Activated naive CD4-positive, alpha-beta T cell treated with anti-CD3 and anti-CD28 coated beads for 36 hours (primary cell): ENCODE measurements at regions of chr10 and their contacts with region 1.

Region 1: DNA sequence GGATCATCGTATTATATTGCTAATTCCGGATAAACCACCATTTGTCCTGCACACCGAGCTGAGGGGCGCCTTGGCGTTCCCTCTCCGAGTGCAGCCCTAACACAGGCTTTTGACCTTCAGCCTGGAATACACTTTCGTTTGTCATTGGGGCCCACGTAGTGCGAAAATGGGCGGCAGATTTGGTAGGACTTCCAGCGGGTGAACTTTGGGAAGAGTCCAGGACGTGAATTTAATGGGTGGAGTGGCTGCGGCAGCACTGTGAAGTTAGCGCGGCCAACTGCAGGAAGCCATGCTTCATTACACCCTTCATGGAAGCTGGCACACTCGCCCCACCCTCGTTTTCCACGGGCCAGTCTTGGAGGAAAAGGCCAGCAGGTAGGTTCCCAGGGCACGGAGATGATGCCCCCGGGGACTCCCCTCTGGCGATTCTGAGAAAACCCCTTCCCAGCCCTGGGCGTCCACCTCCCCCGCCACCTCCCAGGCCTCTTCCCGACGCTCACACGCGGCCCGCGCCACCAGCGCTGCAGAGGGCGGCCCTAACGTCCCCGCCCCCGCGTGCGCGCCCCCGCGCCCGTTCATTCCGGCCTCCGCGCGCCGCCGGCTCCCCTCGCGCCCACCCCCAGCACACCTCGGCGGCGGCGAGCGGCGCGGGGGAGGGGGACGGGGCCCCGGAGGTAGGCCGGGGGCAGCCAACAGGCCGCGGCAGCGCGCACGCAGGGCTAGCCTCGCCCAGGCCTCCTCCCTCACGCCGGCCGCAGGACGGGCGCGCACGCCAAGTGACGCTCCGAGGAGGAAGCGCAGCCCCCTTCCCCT is at the start of gene MLLT10:
- DNase-seq: peak; percentile 91
- H3K4me3 Mint-ChIP-seq: peak within 1 kb of the TSS; percentile 85
- H3K27ac Mint-ChIP-seq: peak within 1 kb of the TSS; percentile 91
- H3K4me1 Mint-ChIP-seq: peaks cover 23% of the 10 kb centered on the region
- H3K27me3 Mint-ChIP-seq: no peaks in the 10 kb centered on the region
- total RNA-seq, gene MLLT10: 23.0 to 23.7 TPM

Region 2: GRCh38 chr10:21505711-21506278 is 27.9 kb before region 1 on chr10:
- CTCF ChIA-PET with region 1: no interaction called
- intact Hi-C with region 1: no loop called
- DNase-seq: no peak
- H3K4me3 Mint-ChIP-seq: no peak overlapping the region
- H3K27ac Mint-ChIP-seq: no peak overlapping the region
- H3K4me1 Mint-ChIP-seq: no peaks in the 10 kb centered on the region
- H3K27me3 Mint-ChIP-seq: peaks cover 16% of the 10 kb centered on the region

Region 3: GRCh38 chr10:21516242-21517131 is 17.2 kb before region 1 on chr10:
- CTCF ChIA-PET with region 1: interaction called, 4 read pairs
- intact Hi-C with region 1: loop called (anchors 1 kb)
- DNase-seq: peak; percentile 58
- H3K4me3 Mint-ChIP-seq: peak overlapping the region; percentile 70
- H3K27ac Mint-ChIP-seq: no peak overlapping the region
- H3K4me1 Mint-ChIP-seq: peaks cover 36% of the 10 kb centered on the region
- H3K27me3 Mint-ChIP-seq: peaks cover 76% of the 10 kb centered on the region

Region 4: DNA sequence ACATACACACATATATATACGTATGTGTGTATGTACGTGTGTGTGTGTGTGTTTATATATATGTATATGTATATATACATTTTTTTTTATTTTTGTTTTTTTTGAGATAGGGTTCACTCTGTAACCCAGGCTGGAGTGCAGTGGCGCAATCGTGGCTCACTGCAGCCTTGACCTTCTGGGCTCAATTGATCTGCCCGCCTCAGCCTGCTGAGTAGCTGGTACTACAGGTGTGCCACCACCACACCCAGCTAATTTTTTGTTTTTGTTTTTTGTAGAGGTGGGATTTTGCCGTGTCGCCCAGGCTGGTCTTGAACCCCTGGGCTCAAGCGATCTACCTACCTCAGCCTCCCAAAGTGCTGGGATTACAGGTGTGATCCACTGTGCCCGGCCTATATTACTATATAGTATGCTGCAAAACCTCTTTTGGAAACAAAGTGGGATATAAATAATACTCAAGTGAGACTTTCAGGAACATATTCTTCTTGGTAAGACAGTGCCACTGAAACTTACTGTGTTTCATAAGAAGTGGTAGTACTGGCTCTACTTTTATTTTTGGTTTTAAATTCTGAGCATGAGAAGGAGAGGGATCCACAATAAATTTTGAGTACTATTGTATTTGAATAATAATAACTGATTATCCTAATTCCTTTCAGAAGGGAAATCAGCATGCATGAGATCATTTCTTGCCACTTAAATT is 51.3 kb after region 1 on chr10:
- CTCF ChIA-PET with region 1: no interaction called
- intact Hi-C with region 1: loop called (anchors 2 kb)
- DNase-seq: no peak
- H3K4me3 Mint-ChIP-seq: no peak overlapping the region
- H3K27ac Mint-ChIP-seq: no peak overlapping the region
- H3K4me1 Mint-ChIP-seq: peaks cover 42% of the 10 kb centered on the region
- H3K27me3 Mint-ChIP-seq: no peaks in the 10 kb centered on the region

Region 5: GRCh38 chr10:21675157-21675796 is 141.6 kb after region 1 on chr10:
- CTCF ChIA-PET with region 1: no interaction called
- intact Hi-C with region 1: loop called (anchors 5 kb)
- DNase-seq: peak; percentile 51
- H3K4me3 Mint-ChIP-seq: no peak overlapping the region
- H3K27ac Mint-ChIP-seq: no peak overlapping the region
- H3K4me1 Mint-ChIP-seq: peaks cover 3% of the 10 kb centered on the region
- H3K27me3 Mint-ChIP-seq: no peaks in the 10 kb centered on the region

Region 6: GRCh38 chr10:22251751-22252223 is 718.1 kb after region 1 on chr10:
- CTCF ChIA-PET with region 1: no interaction called
- intact Hi-C with region 1: loop called (anchors 5 kb)
- DNase-seq: peak; percentile 74
- H3K4me3 Mint-ChIP-seq: peak overlapping the region; percentile 99
- H3K27ac Mint-ChIP-seq: peak overlapping the region; percentile 99
- H3K4me1 Mint-ChIP-seq: peaks cover 34% of the 10 kb centered on the region
- H3K27me3 Mint-ChIP-seq: peaks cover 5% of the 10 kb centered on the region